PC-9 (cell line): ENCODE measurements at regions of chr15 and their contacts with region 1.

Region 1: GRCh38 chr15:74956648-74957300 is at the start of gene RPP25:
- DNase-seq: peak; percentile 74 to 88
- H3K4me3 ChIP-seq: peak within 1 kb of the TSS; percentile 92
- H3K27ac ChIP-seq: peak within 1 kb of the TSS; percentile 75
- H3K4me1 ChIP-seq: peaks cover 26% of the 10 kb centered on the region
- H3K27me3 ChIP-seq: no peaks in the 10 kb centered on the region
- CTCF ChIP-seq: 0 out of 2 replicates have a peak, but pooled peaks have one; percentile 2
- total RNA-seq, gene RPP25: 14.9 and 19.6 TPM in 2 replicates

Region 2: GRCh38 chr15:74866090-74866489 is 90.7 kb before region 1 on chr15:
- CTCF ChIA-PET with region 1: no interaction called
- POLR2A ChIA-PET with region 1: no interaction called
- intact Hi-C with region 1: no loop called
- DNase-seq: peak; percentile 46 to 71
- H3K4me3 ChIP-seq: no peak overlapping the region
- H3K27ac ChIP-seq: peak overlapping the region; percentile 49; the same call in 1 of the 2 replicates
- H3K4me1 ChIP-seq: peaks cover 67% of the 10 kb centered on the region
- H3K27me3 ChIP-seq: no peaks in the 10 kb centered on the region
- CTCF ChIP-seq: no peak

Region 3: DNA sequence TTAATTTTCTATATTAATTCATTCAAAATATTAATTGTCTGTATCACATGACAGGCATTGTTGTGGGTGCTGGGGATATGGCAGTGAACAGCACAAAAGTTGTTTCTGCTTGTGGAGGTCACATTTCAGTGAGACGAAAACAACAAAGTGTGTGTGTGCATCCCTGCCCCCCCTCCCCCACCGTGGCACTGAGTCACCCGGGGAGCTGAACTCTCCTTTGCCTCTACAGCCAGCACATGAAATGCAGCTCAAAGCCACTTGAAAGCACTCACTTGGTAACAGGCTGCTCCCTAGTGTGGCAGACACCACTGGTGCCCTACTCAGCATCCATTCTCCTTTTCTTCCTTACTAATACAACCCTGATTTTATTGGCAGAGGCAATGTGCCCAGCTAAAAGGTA is 21.7 kb after region 1 on chr15:
- CTCF ChIA-PET with region 1: no interaction called
- POLR2A ChIA-PET with region 1: interaction called, 10 read pairs
- intact Hi-C with region 1: loop called (anchors 2 kb)
- DNase-seq: no peak
- H3K4me3 ChIP-seq: no peak overlapping the region
- H3K27ac ChIP-seq: no peak overlapping the region
- H3K4me1 ChIP-seq: peaks cover 16% of the 10 kb centered on the region
- H3K27me3 ChIP-seq: no peaks in the 10 kb centered on the region
- CTCF ChIP-seq: no peak

Region 4: GRCh38 chr15:74988007-74988800 is 31.4 kb after region 1 on chr15:
- CTCF ChIA-PET with region 1: no interaction called
- POLR2A ChIA-PET with region 1: no interaction called
- intact Hi-C with region 1: loop called (anchors 2 kb)
- DNase-seq: peak; percentile 59 to 60
- H3K4me3 ChIP-seq: no peak overlapping the region
- H3K27ac ChIP-seq: no peak overlapping the region
- H3K4me1 ChIP-seq: peaks cover 16% of the 10 kb centered on the region
- H3K27me3 ChIP-seq: peaks cover 25% of the 10 kb centered on the region
- CTCF ChIP-seq: peak; percentile 83

Region 5: DNA sequence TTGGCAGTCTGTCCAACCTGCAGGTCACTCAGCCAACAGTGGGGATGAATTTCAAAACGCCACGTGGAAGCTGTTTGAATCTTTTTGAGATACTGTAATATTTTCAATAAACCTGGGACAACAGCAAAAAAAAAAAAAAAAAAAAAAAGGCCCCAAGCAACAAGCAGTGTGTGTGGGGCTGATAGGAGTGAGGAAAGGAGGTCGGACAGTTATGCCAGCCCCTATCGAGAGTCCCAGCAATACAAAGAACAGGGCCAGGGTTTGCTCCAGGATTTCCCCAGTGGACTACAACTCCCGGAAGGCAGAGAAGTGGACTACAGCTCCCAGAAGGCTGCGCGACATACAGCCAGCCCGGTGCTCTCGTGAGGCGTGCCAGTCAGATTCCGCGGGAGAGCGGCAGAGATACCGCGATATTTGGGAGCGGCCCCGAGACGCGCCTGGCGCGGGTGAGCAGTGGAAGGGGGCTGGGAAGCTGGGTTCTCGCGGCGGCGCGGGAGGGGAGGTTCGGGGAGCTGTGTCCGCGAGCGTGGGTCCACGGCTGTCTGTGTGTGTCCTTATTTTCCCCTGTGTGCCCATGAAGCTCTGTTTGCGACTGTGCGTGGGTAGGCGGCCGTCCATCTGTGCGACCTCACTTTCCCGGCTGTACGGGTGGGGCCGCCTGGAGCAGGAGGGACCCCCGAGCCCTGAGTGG is 66.6 kb after region 1 on chr15 and contains the start of gene PPCDC:
- CTCF ChIA-PET with region 1: interaction called, 3 read pairs
- POLR2A ChIA-PET with region 1: no interaction called
- intact Hi-C with region 1: loop called (anchors 5 kb)
- DNase-seq: peak; percentile 85 to 93
- H3K4me3 ChIP-seq: peak within 1 kb of the TSS; percentile 90
- H3K27ac ChIP-seq: peak within 1 kb of the TSS; percentile 50
- H3K4me1 ChIP-seq: no peaks in the 10 kb centered on the region; the same call in 1 of the 2 replicates
- H3K27me3 ChIP-seq: no peaks in the 10 kb centered on the region
- CTCF ChIP-seq: no peak
- total RNA-seq, gene PPCDC: 23.7 and 24.4 TPM in 2 replicates